ENCODE measurements at regions of chr11 and their contacts with region 1.

Region 1: DNA sequence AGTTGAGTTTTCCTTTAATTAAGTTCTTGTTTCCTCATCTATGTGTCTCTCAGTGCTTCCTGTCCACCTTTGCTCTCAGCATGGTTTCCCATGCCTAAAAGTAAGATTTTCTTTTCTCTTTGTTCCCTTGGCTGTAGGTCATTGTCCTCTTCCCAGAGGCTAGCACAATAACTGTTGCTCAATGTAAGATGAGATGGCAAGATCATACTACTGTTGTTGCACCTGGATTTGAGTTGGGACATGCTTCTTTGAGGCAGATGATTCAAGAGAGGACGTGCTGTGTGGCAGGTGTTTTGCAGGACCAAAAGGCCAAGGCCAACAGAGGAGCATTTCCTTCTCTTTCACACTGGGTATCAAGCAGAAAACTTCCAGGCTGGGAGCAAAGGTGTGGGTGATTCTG is 11.3 kb upstream of the NELL1 start:
- DNase-seq: no peak
- H3K4me3 ChIP-seq: no peak overlapping the region
- CTCF ChIP-seq: no peak
- POLR2A ChIP-seq: no peak

Region 2: GRCh38 chr11:20609727-20610707 is 48.1 kb before region 1 on chr11:
- intact Hi-C with region 1: no loop called
- DNase-seq: peak; percentile 40 to 92
- H3K4me3 ChIP-seq: no peak overlapping the region
- CTCF ChIP-seq: no peak
- POLR2A ChIP-seq: no peak

Region 3: DNA sequence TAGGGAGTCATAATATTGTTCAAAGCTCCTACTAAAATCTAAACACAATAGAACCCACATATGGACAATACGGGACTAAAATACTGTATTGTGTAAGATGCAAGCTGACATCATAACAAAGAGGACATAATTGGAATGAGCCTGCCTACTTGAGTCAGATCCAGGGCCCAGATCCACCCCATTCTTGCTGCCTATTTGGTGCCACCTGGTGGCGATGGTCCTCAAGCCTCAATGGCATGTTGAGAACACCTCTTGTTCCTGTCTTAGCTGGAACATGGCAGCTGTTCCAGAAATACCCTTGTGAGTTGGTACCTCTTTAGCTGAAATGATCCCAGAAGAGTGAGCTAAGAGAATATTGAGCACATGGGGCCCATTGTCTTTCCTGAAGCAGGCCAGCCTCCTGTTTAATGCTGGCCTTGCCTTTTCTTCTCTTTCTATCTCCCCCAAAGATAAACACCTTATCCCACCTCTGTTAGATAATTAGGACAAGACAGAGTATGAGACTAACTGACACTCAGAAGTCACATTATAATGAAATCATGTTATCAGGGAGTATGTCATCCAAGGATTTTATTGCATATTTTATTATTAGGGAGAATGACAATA is 853.8 kb after region 1 on chr11:
- intact Hi-C with region 1: loop called (anchors 10 kb)
- DNase-seq: peak in 1 of 2 donors; percentile 46
- H3K4me3 ChIP-seq: no peak overlapping the region
- CTCF ChIP-seq: no peak
- POLR2A ChIP-seq: no peak